ENCODE measurements at regions of chr15 and their contacts with region 1.

Region 1: DNA sequence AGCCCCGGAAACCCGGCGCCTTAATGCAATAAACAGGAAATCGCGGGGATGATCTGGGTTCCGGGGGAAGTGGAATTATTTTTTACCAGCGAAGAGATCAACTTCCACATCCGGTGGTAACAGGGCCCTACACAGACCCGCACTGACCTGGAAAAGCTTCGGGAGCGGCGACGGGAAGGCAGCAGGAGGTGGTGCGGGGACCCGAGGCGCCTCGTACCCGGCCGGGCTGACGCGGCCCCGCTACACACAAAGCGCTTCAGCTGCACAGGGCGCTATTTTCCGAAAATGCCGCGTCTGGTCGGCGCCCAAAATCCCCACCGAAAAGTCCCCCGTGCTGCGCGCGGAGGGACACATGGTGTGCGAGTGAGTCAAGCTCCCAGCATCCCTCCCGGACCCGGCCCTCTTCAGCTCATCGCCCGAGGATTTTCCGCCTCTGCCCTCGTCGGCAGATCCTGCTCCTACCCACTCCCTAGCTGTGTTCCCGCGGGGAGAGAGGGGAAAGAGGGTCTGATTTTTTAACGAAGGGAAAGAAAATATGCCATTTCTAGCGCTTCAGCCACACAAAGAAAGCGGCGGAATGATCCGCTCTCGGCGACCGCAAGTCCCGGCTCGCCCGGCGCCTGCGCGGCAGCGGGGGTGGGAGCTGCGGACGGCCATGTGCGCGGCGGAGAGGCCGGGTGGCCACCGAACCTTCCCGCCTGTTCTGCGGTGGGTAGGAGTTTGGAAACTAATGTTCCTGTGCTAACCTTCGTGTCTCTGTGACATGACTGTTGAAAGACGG is at the start of gene GABPB1:
- DNase-seq: peak; percentile 87
- ATAC-seq: peak; percentile 55
- H3K4me3 Mint-ChIP-seq: peak within 1 kb of the TSS; percentile 98
- H3K27ac Mint-ChIP-seq: peak within 1 kb of the TSS; percentile 99
- H3K4me1 Mint-ChIP-seq: peaks cover 69% of the 10 kb centered on the region
- H3K27me3 Mint-ChIP-seq: no peaks in the 10 kb centered on the region
- CTCF ChIP-seq: no peak
- total RNA-seq, gene GABPB1: 32.5 and 32.7 TPM in 2 replicates

Region 2: GRCh38 chr15:48877630-48878595 is 1477.1 kb before region 1 on chr15 and contains the start of gene EID1:
- CTCF ChIA-PET with region 1: no interaction called
- POLR2A ChIA-PET with region 1: interaction called, 14 read pairs
- intact Hi-C with region 1: loop called (anchors 5 kb)
- DNase-seq: peak; percentile 90
- ATAC-seq: peak; percentile 95
- H3K4me3 Mint-ChIP-seq: peak within 1 kb of the TSS; percentile 99
- H3K27ac Mint-ChIP-seq: peak within 1 kb of the TSS; percentile 97
- H3K4me1 Mint-ChIP-seq: peaks cover 27% of the 10 kb centered on the region
- H3K27me3 Mint-ChIP-seq: peaks cover 3% of the 10 kb centered on the region
- CTCF ChIP-seq: no peak
- total RNA-seq, gene EID1: 51.3 and 54.4 TPM in 2 replicates

Region 3: GRCh38 chr15:49620658-49621368 is 734.2 kb before region 1 on chr15 and contains the starts of genes DTWD1 and FAM227B:
- CTCF ChIA-PET with region 1: no interaction called
- POLR2A ChIA-PET with region 1: interaction called, 4 read pairs
- intact Hi-C with region 1: loop called (anchors 1 kb)
- DNase-seq: peak; percentile 90
- ATAC-seq: peak; percentile 96
- H3K4me3 Mint-ChIP-seq: peak within 1 kb of the TSS; percentile 96
- H3K27ac Mint-ChIP-seq: peak within 1 kb of the TSS; percentile 96
- H3K4me1 Mint-ChIP-seq: peaks cover 31% of the 10 kb centered on the region
- H3K27me3 Mint-ChIP-seq: no peaks in the 10 kb centered on the region
- CTCF ChIP-seq: no peak
- total RNA-seq, gene DTWD1: 20.5 and 21.4 TPM in 2 replicates
- total RNA-seq, gene FAM227B: 4.3 and 4.5 TPM in 2 replicates

Region 4: GRCh38 chr15:50247819-50248655 is 107.0 kb before region 1 on chr15:
- CTCF ChIA-PET with region 1: no interaction called
- POLR2A ChIA-PET with region 1: no interaction called
- intact Hi-C with region 1: no loop called
- DNase-seq: no peak
- ATAC-seq: peak; percentile 96
- H3K4me3 Mint-ChIP-seq: peak overlapping the region; percentile 45
- H3K27ac Mint-ChIP-seq: peak overlapping the region; percentile 33
- H3K4me1 Mint-ChIP-seq: peaks cover 9% of the 10 kb centered on the region
- H3K27me3 Mint-ChIP-seq: no peaks in the 10 kb centered on the region
- CTCF ChIP-seq: no peak

Region 5: DNA sequence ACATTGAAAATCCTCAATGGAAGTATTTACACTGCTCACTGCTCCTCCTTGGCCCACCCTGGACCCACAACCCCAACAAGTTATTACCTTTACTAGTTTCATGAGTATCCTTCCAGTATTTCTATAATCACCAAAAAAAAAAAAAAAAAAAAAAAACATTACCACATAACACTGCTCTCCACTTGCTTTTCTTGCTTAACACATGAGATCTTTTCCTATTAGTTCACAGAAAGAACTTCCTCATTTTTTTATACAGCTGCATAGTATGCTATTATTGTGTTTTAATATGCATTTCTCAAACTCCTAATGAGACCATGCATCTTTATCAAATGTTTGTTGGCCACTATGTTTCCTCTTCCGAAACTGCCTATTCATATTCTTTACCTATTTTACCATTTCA is 14.6 kb before region 1 on chr15:
- CTCF ChIA-PET with region 1: no interaction called
- POLR2A ChIA-PET with region 1: interaction called, 22 read pairs
- intact Hi-C with region 1: no loop called
- DNase-seq: no peak
- ATAC-seq: peak; percentile 37
- H3K4me3 Mint-ChIP-seq: no peak overlapping the region
- H3K27ac Mint-ChIP-seq: no peak overlapping the region
- H3K4me1 Mint-ChIP-seq: peaks cover 25% of the 10 kb centered on the region
- H3K27me3 Mint-ChIP-seq: no peaks in the 10 kb centered on the region
- CTCF ChIP-seq: no peak

Region 6: DNA sequence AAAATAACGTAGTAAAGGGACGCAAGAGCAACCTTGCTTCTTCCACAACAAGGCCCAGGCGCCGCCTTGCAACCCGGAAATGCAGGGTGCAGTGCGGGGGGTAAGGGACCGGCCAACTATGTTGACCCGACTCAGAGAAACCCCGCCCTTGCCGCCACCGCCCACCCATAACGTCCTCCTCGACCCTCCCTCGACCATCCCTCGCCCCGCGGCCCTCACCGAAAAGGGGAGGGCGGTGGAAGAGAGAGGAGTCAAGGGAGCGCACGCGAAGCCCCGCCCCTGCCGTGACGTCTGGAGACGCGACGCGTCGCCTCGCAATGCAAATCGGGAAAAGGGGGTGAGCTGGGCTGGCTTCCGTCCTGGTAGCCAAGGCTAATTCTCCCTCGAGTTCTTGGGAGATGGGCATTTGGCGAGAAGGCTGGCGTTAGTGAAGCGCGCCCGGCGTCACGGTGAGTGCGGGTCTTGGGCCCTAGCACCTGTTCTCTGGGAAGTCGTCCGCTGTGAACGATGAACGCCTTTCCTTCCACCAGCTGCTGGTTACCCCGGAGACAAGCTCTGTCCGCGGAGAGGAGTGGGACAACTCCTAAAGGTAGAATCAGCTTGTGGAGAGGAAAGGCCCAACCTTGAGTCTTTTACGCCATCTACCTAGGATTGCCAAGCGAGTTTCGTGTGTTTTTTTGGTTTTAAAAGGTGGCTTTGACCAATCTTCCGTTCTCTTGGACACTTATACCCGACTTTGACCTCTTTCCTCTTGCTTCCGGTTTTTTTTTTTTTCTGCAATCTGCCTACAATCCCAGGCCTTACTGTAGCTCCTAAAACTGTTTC is 69.2 kb after region 1 on chr15 and contains the start of gene USP8:
- CTCF ChIA-PET with region 1: interaction called, 3 read pairs
- POLR2A ChIA-PET with region 1: interaction called, 158 read pairs
- intact Hi-C with region 1: loop called (anchors 1 kb)
- DNase-seq: peak; percentile 90
- ATAC-seq: peak; percentile 98
- H3K4me3 Mint-ChIP-seq: peak within 1 kb of the TSS; percentile 90
- H3K27ac Mint-ChIP-seq: peak within 1 kb of the TSS; percentile 89
- H3K4me1 Mint-ChIP-seq: peaks cover 44% of the 10 kb centered on the region
- H3K27me3 Mint-ChIP-seq: no peaks in the 10 kb centered on the region
- CTCF ChIP-seq: no peak
- total RNA-seq, gene USP8: 71.3 and 78.3 TPM in 2 replicates

Region 7: GRCh38 chr15:50686468-50687301 is 331.7 kb after region 1 on chr15 and contains the start of gene TRPM7:
- CTCF ChIA-PET with region 1: no interaction called
- POLR2A ChIA-PET with region 1: interaction called, 7 read pairs
- intact Hi-C with region 1: loop called (anchors 2 kb)
- DNase-seq: peak; percentile 92
- ATAC-seq: peak; percentile 80
- H3K4me3 Mint-ChIP-seq: peak within 1 kb of the TSS; percentile 99
- H3K27ac Mint-ChIP-seq: peak within 1 kb of the TSS; percentile 92
- H3K4me1 Mint-ChIP-seq: peaks cover 58% of the 10 kb centered on the region
- H3K27me3 Mint-ChIP-seq: no peaks in the 10 kb centered on the region
- CTCF ChIP-seq: no peak
- total RNA-seq, gene TRPM7: 59.4 and 64.7 TPM in 2 replicates

Region 8: GRCh38 chr15:51737280-51738017 is 1382.4 kb after region 1 on chr15 and contains the start of gene LYSMD2:
- CTCF ChIA-PET with region 1: no interaction called
- POLR2A ChIA-PET with region 1: interaction called, 4 read pairs
- intact Hi-C with region 1: loop called (anchors 10 kb)
- DNase-seq: peak; percentile 75
- ATAC-seq: peak; percentile 49
- H3K4me3 Mint-ChIP-seq: peak within 1 kb of the TSS; percentile 90
- H3K27ac Mint-ChIP-seq: peak within 1 kb of the TSS; percentile 93
- H3K4me1 Mint-ChIP-seq: peaks cover 52% of the 10 kb centered on the region
- H3K27me3 Mint-ChIP-seq: no peaks in the 10 kb centered on the region
- CTCF ChIP-seq: no peak
- total RNA-seq, gene LYSMD2: 41.8 and 48.6 TPM in 2 replicates

Measured in activated B cell treated with CpG ODN at 0.5 μM for 24 hours (primary cell).